Activated B cell treated with CpG ODN at 0.5 μM for 24 hours (primary cell): ENCODE measurements at regions of chr22 and their contacts with region 1.

Region 1: GRCh38 chr22:40651563-40652501 is 15.3 kb upstream of the MRTFA start:
- DNase-seq: peak; percentile 42
- ATAC-seq: peak; percentile 90
- H3K4me3 Mint-ChIP-seq: peak overlapping the region; percentile 83
- H3K27ac Mint-ChIP-seq: peak overlapping the region; percentile 88
- H3K4me1 Mint-ChIP-seq: peaks cover 12% of the 10 kb centered on the region
- H3K27me3 Mint-ChIP-seq: no peaks in the 10 kb centered on the region
- CTCF ChIP-seq: no peak

Region 2: DNA sequence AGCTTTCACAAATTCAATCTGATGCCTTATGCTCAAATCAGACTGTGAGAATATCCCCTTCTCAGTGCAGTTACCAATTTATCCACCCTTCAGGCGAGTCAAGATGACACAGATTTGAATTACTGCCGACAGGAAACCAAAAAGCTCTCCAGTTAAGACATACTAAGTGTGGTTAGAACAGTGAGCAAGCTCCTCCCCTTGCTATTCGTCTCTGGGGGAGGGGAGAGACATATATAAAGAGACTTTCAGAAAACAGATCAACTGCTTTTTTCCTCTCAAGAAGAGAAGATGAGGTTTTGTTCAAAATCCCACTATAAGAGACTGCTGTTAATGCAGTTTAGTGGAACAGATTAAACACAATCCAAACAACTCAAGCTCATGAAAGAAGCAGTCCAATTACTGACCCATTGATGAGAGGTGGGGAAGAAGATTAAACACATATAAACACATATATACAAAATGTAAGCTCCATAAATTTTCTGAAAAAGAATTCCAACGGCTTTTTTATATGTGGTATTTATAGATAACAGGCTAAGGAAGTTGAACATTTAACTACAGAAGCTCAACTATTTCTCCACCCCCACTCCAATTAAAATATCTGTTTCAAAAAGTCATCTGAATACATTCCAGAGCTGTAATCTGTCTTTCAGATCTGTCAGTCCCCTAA is 118.0 kb before region 1 on chr22:
- CTCF ChIA-PET with region 1: interaction called, 215 read pairs
- POLR2A ChIA-PET with region 1: interaction called, 9 read pairs
- intact Hi-C with region 1: no loop called
- DNase-seq: no peak
- ATAC-seq: peak; percentile 96
- H3K4me3 Mint-ChIP-seq: peak overlapping the region; percentile 75
- H3K27ac Mint-ChIP-seq: peak overlapping the region; percentile 83
- H3K4me1 Mint-ChIP-seq: peaks cover 61% of the 10 kb centered on the region
- H3K27me3 Mint-ChIP-seq: no peaks in the 10 kb centered on the region
- CTCF ChIP-seq: no peak